ENCODE measurements at regions of chr11 and their contacts with region 1.

Region 1: GRCh38 chr11:43880640-43881159 is at the start of gene ALKBH3:
- DNase-seq: peak; percentile 92 to 95 (median 94)
- ATAC-seq: peak; percentile 97 to 100 (median 100)
- H3K4me3 ChIP-seq: peak within 1 kb of the TSS; percentile 53 to 98 (median 90)
- H3K27ac ChIP-seq: peak within 1 kb of the TSS in 11 of 12 donors; percentile 29 to 84 (median 73)
- H3K4me1 ChIP-seq: peaks cover 4 to 20% (median 15%) of the 10 kb centered on the region in 12 donors
- H3K27me3 ChIP-seq: peaks cover 0 to 25% (median 5%) of the 10 kb centered on the region in 9 donors
- CTCF ChIP-seq: peak in 3 of 12 donors; percentile 12 to 25 (median 14)
- POLR2A ChIP-seq: peak in 1 of 2 donors; percentile 59
- total RNA-seq, gene ALKBH3: 13.1 to 24.7 (median 19.5) TPM

Region 2: GRCh38 chr11:43992834-43993637 is 112.3 kb after region 1 on chr11:
- intact Hi-C with region 1: loop called in 1 of 10 experiments (anchors 5 kb)
- DNase-seq: peak in 4 of 5 donors; percentile 37 to 70 (median 52)
- ATAC-seq: peak; percentile 25 to 77 (median 62)
- H3K4me3 ChIP-seq: peak overlapping the region in 3 of 12 donors; percentile 14 to 33 (median 17)
- H3K27ac ChIP-seq: peak overlapping the region in 11 of 12 donors; percentile 36 to 80 (median 75)
- H3K4me1 ChIP-seq: peaks cover 10 to 51% (median 36%) of the 10 kb centered on the region in 12 donors
- H3K27me3 ChIP-seq: no peaks in the 10 kb centered on the region
- CTCF ChIP-seq: peak in 1 of 12 donors; percentile 15
- POLR2A ChIP-seq: no peak